ENCODE measurements at regions of chr6 and their contacts with region 1.

Region 1: DNA sequence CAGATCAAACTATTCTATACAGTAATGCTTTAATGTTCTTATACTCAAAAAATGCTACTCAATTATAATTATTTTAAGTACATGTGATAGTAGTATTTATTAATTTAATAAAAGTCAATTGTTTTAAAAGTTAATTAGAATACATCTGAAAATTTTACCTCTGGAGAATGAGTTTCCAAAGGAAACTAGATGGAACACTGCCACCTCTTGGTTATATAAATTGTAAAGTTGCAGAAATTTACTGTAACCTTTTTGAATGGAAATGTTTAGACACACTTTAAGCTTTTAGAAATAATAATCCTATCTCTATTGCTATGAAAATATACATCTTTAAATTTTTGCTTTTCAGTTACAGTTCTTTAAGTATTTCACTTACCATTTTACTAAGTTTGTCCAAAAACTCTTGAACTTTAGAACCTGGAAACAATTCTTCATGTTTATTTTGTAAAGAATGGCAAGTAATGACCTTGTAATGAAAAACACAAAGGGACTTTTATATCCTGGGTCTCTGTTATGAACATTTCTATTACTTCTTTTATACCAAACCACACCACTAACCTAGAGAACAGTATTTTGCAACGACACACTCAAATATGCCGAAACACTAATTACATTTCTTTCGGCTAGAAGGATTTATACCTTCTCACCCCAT is 10.9 kb upstream of the BMP5 start:
- DNase-seq: peak; percentile 69
- ATAC-seq: no peak
- H3K4me3 ChIP-seq: no peak overlapping the region
- H3K27ac ChIP-seq: no peak overlapping the region
- H3K4me1 ChIP-seq: peaks cover 31% of the 10 kb centered on the region
- H3K27me3 ChIP-seq: no peaks in the 10 kb centered on the region
- CTCF ChIP-seq: peak; percentile 64

Region 2: GRCh38 chr6:55445648-55446204 is 440.6 kb before region 1 on chr6:
- CTCF ChIA-PET with region 1: no interaction called
- POLR2A ChIA-PET with region 1: no interaction called
- intact Hi-C with region 1: loop called (anchors 1 kb)
- DNase-seq: peak; percentile 58
- ATAC-seq: no peak
- H3K4me3 ChIP-seq: no peak overlapping the region
- H3K27ac ChIP-seq: no peak overlapping the region
- H3K4me1 ChIP-seq: no peaks in the 10 kb centered on the region
- H3K27me3 ChIP-seq: peaks cover 9% of the 10 kb centered on the region
- CTCF ChIP-seq: peak; percentile 80

Region 3: DNA sequence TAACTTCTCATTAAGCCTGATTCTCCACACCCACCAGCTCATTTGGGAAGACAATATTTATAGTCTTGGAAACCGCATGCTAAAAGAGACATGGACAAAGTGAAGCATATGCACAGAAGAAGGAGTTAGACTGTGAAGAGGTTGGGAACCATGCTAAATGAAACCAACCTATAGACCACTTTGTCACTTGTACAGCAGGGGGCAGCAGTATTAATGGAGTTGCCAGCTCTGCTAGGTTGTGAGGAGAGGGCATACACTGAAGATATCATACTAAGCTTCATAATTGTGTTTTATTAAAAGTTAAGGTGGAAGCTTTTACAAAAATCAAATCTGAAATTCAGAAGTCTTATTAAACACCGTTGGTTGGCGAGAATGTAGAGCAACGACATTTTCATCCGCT is 269.0 kb before region 1 on chr6:
- CTCF ChIA-PET with region 1: no interaction called
- POLR2A ChIA-PET with region 1: no interaction called
- intact Hi-C with region 1: loop called (anchors 1 kb)
- DNase-seq: peak; percentile 76
- ATAC-seq: peak; percentile 86
- H3K4me3 ChIP-seq: no peak overlapping the region
- H3K27ac ChIP-seq: no peak overlapping the region
- H3K4me1 ChIP-seq: no peaks in the 10 kb centered on the region
- H3K27me3 ChIP-seq: no peaks in the 10 kb centered on the region
- CTCF ChIP-seq: peak; percentile 86

Region 4: DNA sequence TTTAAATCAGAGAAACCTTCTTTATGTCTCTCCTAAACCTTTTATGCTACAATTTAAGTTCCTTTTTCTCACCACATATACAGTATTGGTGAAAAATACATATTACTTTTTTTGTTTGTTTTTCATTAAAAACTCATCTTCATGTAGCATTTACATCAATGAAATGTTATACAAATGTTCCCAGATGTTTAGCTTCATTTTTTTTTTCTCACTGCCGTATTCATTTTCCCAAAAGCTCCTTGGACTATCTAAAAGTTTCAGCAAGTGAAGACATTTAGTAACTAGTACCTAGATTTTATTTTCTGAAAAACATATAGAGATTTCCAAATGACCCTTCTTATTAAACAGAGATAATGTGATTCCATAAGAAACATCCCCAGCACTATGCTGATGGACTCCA is 139.8 kb before region 1 on chr6:
- CTCF ChIA-PET with region 1: no interaction called
- POLR2A ChIA-PET with region 1: no interaction called
- intact Hi-C with region 1: no loop called
- DNase-seq: no peak
- ATAC-seq: no peak
- H3K4me3 ChIP-seq: no peak overlapping the region
- H3K27ac ChIP-seq: no peak overlapping the region
- H3K4me1 ChIP-seq: no peaks in the 10 kb centered on the region
- H3K27me3 ChIP-seq: no peaks in the 10 kb centered on the region
- CTCF ChIP-seq: no peak

Region 5: DNA sequence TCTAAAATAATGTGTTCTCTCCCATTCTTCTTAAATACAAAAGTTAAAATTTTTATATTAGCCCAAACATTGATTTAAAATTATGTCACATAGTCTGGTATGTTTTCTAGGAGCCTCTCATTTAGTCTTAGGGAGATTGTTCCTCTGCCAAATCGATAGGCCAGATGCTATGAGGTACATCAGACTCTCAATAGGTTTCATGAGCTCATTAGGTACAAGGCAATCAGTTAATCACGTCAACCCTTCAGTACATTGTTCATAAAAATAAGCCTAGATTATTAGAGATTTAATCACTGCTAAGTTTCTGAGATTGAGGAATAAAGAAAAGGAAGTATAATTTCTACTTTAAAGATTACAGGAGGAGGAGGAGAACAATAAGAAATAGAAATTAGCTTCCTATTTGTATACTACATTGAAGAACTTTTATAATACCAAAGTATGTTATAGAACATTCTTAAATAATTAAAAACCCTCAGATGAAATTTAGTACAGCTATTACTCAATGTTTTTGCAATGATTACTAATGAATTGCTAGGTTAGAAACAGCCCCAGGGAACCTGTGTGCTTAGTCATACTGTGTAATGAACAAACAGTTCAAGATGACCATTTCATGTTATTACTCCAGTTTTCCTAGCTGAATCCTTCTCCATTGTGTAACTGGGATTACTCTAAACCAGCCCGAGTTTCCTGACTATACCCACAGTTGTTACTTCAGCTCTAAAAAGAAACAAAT is 128.0 kb before region 1 on chr6:
- CTCF ChIA-PET with region 1: no interaction called
- POLR2A ChIA-PET with region 1: no interaction called
- intact Hi-C with region 1: loop called (anchors 1 kb)
- DNase-seq: peak; percentile 97
- ATAC-seq: peak; percentile 99
- H3K4me3 ChIP-seq: no peak overlapping the region
- H3K27ac ChIP-seq: peak overlapping the region; percentile 85
- H3K4me1 ChIP-seq: peaks cover 37% of the 10 kb centered on the region
- H3K27me3 ChIP-seq: no peaks in the 10 kb centered on the region
- CTCF ChIP-seq: no peak

Region 6: GRCh38 chr6:55825402-55826051 is 60.8 kb before region 1 on chr6:
- CTCF ChIA-PET with region 1: no interaction called
- POLR2A ChIA-PET with region 1: no interaction called
- intact Hi-C with region 1: loop called (anchors 5 kb)
- DNase-seq: peak; percentile 77
- ATAC-seq: peak; percentile 89
- H3K4me3 ChIP-seq: no peak overlapping the region
- H3K27ac ChIP-seq: peak overlapping the region; percentile 37
- H3K4me1 ChIP-seq: peaks cover 24% of the 10 kb centered on the region
- H3K27me3 ChIP-seq: no peaks in the 10 kb centered on the region
- CTCF ChIP-seq: no peak

Region 7: DNA sequence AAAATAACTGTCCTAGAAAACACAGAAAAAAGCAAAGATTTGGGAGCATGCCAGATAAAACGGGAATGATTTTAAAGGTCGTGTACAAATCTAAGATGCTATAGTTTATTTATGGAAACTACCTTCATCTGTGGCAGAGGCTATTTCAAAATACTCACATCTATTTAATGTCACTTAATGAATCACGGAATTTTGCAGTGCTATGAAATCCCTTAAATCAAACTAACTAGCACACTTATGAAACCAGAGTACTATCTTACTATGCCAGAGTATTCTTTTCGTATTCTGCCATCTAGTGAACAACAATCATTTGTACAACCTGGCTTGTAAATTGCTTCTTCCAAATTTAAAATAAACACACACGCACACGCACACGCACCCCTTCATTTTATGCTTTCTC is 67.0 kb after region 1 on chr6:
- CTCF ChIA-PET with region 1: no interaction called
- POLR2A ChIA-PET with region 1: no interaction called
- intact Hi-C with region 1: loop called (anchors 1 kb)
- DNase-seq: peak; percentile 76
- ATAC-seq: peak; percentile 92
- H3K4me3 ChIP-seq: peak overlapping the region; percentile 36; the same call in 1 of the 2 replicates
- H3K27ac ChIP-seq: no peak overlapping the region
- H3K4me1 ChIP-seq: no peaks in the 10 kb centered on the region
- H3K27me3 ChIP-seq: no peaks in the 10 kb centered on the region
- CTCF ChIP-seq: peak; percentile 80

Region 8: GRCh38 chr6:56021943-56022342 is 135.6 kb after region 1 on chr6:
- CTCF ChIA-PET with region 1: no interaction called
- POLR2A ChIA-PET with region 1: no interaction called
- intact Hi-C with region 1: no loop called
- DNase-seq: peak; percentile 47
- ATAC-seq: no peak
- H3K4me3 ChIP-seq: no peak overlapping the region
- H3K27ac ChIP-seq: no peak overlapping the region
- H3K4me1 ChIP-seq: no peaks in the 10 kb centered on the region
- H3K27me3 ChIP-seq: no peaks in the 10 kb centered on the region
- CTCF ChIP-seq: peak; percentile 58